ENCODE measurements at regions of chr17 and their contacts with region 1.

Region 1: DNA sequence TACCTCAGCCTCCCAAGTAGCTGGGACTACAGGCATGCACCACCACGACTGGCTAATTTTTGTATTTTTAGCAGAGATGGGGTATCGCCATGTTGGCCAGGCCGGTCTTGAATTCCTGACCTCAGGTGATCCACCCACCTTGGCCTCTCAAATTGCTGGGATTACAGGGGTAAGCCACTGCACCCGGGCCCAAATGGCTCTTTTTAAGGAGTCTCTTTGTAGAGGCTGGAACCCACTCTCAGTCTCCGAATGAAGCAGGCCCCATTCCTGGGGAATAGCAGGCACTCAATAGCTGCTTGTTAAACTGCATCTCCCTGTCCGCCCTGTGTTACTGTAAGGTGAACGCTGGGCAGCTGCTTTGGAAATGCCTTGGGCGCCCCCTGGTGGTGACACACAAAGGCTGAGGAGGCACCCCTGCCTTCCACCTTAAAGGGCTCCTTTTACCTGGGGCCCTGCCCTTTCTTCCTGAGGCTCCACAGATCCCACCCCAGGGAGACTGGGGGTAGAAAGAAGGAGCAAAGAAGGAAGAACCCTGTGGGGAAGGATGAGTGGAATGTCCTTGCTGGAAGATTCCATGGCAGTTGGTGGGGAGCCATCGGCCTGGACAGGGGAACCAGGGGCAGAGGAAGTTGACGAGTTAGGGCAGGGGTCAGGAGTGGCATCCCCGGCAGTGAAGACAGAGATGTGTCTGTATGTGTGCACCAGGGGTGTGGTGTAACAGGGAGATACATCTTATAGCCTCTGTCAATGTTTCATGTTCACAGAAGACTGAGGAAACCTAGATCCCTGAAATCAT is 6.1 kb upstream of the SP2 start:
- DNase-seq: peak; percentile 94
- H3K4me3 Mint-ChIP-seq: no peak overlapping the region
- H3K27ac Mint-ChIP-seq: no peak overlapping the region
- H3K4me1 Mint-ChIP-seq: peaks cover 17% of the 10 kb centered on the region
- H3K27me3 Mint-ChIP-seq: no peaks in the 10 kb centered on the region

Region 2: DNA sequence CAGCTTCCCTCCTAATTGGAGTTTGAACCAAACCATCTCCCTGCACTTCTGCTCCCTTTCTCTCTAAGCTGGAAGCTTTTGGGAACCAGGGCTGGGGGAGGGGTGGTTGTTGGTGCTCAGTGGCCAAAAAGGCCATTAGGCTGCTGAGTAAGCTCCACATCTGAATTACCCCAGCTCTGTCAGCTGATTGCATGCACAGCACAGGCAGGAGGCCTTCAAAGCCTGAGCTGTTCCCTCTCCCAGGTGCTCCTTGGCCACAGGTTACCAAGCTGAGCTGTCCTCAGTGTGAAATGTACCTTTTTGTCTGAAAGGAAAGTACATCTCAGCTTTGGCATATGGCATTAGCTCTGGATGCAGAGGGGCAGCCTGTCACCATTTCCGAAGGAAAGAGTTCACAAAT is 202.2 kb before region 1 on chr17:
- CTCF ChIA-PET with region 1: no interaction called
- POLR2A ChIA-PET with region 1: no interaction called
- intact Hi-C with region 1: no loop called
- DNase-seq: no peak
- H3K4me3 Mint-ChIP-seq: no peak overlapping the region
- H3K27ac Mint-ChIP-seq: no peak overlapping the region
- H3K4me1 Mint-ChIP-seq: peaks cover 30% of the 10 kb centered on the region
- H3K27me3 Mint-ChIP-seq: no peaks in the 10 kb centered on the region

Region 3: DNA sequence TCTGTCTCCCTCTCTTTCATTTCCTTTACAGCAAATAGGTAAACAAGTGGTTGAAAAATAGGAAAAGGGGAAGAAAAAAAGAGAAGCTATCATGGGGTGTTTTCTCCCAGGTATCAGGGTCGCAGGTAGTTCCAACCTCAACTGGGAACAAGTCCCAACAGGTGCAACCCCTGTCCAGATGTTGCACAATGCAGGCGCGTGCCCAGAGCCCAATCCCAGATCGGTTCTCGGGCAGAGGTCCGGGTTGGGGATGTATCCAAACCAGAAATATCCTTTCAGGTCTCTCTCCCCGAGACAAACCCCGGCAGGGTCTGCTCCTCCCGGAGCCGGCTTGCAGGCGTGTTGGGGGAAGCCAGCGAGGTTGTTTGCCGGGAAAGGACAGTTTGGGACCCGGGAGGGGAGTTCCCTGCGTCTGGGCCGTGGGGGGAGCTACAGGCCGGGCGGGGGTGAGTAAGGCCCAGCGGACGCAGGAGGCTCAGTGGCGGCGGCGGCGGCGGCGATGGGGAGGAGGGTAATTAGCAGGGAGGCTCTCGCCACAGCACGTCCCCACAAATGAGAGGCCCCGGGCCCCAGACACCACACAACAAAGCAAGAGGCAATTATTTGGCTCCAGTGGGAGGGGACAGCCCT is 17.8 kb before region 1 on chr17:
- CTCF ChIA-PET with region 1: interaction called, 10 read pairs
- POLR2A ChIA-PET with region 1: no interaction called
- intact Hi-C with region 1: no loop called
- DNase-seq: no peak
- H3K4me3 Mint-ChIP-seq: no peak overlapping the region
- H3K27ac Mint-ChIP-seq: no peak overlapping the region
- H3K4me1 Mint-ChIP-seq: no peaks in the 10 kb centered on the region
- H3K27me3 Mint-ChIP-seq: peaks cover 28% of the 10 kb centered on the region

Region 4: DNA sequence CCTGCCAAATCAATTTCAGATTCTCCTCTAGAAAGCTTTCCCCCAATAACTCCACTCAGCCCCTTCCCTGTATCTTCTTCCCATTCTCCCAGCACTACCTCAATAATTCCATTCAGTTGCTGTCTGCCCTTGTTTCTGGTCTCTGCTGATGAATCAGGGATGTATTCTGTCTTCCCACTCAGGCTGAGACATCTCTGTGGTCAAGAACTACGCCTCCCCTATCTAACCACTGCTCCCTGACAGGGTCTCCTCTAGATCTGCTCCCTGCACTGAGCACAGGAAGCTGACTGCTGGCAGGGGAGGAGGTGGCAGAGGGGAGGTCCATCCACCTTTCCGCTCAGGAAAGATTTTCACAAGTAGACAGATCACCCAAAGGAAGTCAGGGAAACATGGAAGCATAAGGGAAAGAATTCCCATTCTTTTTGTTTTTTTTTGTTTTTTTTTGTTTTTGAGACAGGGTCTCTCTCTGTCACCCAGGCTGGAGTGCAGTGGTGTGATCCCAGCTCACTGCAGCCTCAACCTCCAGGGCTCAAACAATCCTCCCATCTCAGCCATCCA is 10.8 kb before region 1 on chr17:
- CTCF ChIA-PET with region 1: interaction called, 10 read pairs
- POLR2A ChIA-PET with region 1: no interaction called
- intact Hi-C with region 1: no loop called
- DNase-seq: peak; percentile 25
- H3K4me3 Mint-ChIP-seq: no peak overlapping the region
- H3K27ac Mint-ChIP-seq: no peak overlapping the region
- H3K4me1 Mint-ChIP-seq: peaks cover 15% of the 10 kb centered on the region
- H3K27me3 Mint-ChIP-seq: peaks cover 18% of the 10 kb centered on the region

Measured in activated CD4-positive, alpha-beta memory T cell treated with anti-CD3 and anti-CD28 coated beads for 36 hours (primary cell).